ENCODE measurements at regions of chr1 and their contacts with region 1.

Region 1: DNA sequence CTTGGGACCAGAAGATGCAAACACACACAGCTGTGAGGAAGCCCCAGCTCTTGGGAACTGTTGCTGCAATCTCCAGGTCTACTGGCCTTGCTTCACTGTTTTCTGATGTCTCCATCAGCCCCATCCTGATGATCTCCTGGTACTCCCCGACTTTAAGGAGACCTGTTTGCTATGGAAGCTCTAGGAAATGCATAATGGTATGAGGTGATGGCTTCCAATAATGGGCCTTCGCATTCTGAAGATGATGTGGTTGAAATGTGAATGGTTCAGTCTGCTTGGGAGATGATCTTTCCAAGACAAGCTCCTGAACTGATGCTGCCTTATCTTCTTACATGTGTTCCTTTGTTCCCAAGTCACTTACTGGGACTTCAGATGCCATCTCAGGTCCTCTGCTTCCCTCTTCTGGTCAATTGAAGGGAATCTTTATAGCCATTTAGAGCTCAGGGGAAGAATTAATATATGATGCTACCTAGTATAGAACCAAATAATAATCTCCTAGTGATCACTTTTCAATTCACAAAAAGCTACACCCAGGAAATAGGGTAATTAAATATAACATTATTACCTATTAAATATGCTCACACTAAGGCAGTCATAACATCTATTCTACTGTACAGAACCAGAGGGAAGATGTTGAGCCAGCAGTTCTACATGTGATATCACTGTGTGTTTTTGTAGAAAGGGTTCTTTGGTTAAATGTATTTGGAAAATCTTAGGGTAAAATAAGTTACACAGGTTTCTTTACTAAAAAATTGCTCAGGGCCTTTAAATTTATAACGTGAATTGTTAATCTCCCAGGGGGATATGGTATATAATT is 73.9 kb upstream of the VTCN1 start:
- DNase-seq: no peak
- H3K4me3 Mint-ChIP-seq: no peak overlapping the region
- H3K27ac Mint-ChIP-seq: no peak overlapping the region
- H3K4me1 Mint-ChIP-seq: no peaks in the 10 kb centered on the region
- H3K27me3 Mint-ChIP-seq: no peaks in the 10 kb centered on the region

Region 2: DNA sequence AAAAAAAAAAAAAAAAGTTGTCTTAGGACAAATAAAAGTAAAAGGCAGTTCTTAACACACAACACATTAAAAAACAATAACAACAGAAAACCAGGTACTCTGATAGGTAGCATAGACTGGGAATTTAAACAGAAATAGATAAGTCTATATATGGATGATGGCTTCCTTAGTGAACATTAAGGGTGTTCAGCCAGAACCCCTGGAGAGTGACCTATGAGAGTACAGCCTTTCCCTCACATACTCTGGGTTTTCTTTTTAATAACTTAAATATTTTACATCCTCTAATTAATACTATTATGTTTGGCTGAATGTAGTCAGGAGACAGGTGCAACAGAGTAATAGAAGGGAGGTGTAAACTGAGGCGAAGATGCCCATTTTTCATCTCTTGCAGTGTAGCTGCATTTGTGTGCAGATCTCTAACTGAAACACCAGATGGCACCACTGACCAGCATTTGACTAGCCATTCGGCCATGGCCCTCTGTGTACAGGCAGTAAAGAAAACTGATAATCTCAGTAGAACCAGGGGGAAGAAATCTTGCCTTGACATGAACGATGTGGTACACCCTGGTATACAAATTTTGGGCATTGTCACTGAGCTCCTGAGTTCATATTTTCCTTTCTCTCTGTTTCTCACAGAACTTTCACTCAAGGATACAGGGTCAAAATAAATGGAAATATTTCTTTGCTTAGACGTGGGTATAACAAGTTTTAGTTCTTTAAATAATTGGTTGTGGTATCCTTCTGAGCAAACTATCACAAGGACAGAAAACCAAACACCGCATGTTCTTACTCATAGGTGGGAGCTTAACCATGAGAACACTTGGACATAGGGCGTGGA is 216.9 kb before region 1 on chr1:
- CTCF ChIA-PET with region 1: interaction called, 17 read pairs
- POLR2A ChIA-PET with region 1: no interaction called
- intact Hi-C with region 1: no loop called
- DNase-seq: peak; percentile 60
- H3K4me3 Mint-ChIP-seq: no peak overlapping the region
- H3K27ac Mint-ChIP-seq: no peak overlapping the region
- H3K4me1 Mint-ChIP-seq: peaks cover 38% of the 10 kb centered on the region
- H3K27me3 Mint-ChIP-seq: no peaks in the 10 kb centered on the region

Region 3: GRCh38 chr1:117301901-117302300 is 17.3 kb after region 1 on chr1:
- CTCF ChIA-PET with region 1: no interaction called
- POLR2A ChIA-PET with region 1: no interaction called
- intact Hi-C with region 1: no loop called
- DNase-seq: no peak
- H3K4me3 Mint-ChIP-seq: no peak overlapping the region
- H3K27ac Mint-ChIP-seq: no peak overlapping the region
- H3K4me1 Mint-ChIP-seq: no peaks in the 10 kb centered on the region
- H3K27me3 Mint-ChIP-seq: peaks cover 5% of the 10 kb centered on the region